ENCODE measurements at regions of chr15 and their contacts with region 1.

Region 1: DNA sequence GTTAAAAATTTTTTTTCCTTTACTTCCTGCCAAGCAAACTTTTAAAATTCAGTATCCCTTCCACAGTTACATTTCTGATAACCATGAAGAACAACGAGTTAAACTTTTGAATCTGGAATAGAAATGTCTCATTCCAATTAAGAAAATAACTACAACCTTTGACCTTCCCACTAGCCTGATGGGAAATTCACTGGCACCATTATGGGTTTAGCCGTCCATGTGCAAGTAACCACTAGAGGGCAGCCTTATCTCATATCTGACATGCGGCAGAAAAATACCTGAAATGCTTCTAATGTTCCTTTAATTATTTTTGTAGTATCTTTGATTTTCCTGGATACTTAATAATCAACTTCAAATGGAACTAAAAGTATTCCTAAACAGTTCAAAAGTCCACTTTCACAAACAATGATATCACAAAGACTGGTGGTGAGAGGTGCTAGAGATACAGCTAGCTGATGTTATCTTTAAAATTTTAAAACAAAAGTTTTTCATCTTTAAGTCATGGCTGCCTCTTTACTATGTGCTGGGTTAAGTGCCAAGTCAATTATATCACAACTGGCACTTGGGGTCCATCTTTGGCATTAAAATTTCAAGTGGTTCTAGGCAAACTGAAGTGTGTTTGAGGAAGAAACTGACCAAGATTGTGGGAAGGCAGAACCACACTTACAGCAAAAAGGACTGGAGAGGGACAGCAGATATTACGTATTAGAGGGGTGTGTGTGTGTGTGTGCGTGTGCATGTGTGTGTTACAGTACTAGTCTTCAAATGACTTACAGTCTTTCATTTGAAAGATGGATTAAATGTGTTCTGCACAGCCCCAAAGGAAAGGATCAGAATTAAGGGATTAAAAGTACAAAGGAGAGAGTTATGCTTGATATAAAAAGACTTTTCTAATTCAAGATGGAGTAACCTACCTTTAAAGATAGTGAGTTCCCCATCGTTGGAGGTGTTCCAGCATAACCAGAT is 107.1 kb upstream of the ICE2 start:
- DNase-seq: peak in 11 of 14 experiments; percentile 20 to 89 (median 53)
- ATAC-seq: peak; percentile 33
- H3K4me3 ChIP-seq: peak overlapping the region; percentile 13
- H3K4me3 Mint-ChIP-seq: peak overlapping the region; percentile 81
- H3K27ac ChIP-seq: peak overlapping the region; percentile 21 to 47
- H3K27ac Mint-ChIP-seq: peak overlapping the region; percentile 85
- H3K4me1 ChIP-seq: peaks cover 35% of the 10 kb centered on the region
- H3K4me1 Mint-ChIP-seq: peaks cover 89% of the 10 kb centered on the region
- H3K27me3 ChIP-seq: no peaks in the 10 kb centered on the region
- H3K27me3 Mint-ChIP-seq: no peaks in the 10 kb centered on the region
- CTCF ChIP-seq: peak; percentile 95

Region 2: GRCh38 chr15:59924812-59925522 is 661.1 kb before region 1 on chr15:
- CTCF ChIA-PET with region 1: no interaction called
- POLR2A ChIA-PET with region 1: no interaction called
- intact Hi-C with region 1: no loop called
- DNase-seq: no peak
- ATAC-seq: no peak
- H3K4me3 ChIP-seq: no peak overlapping the region
- H3K4me3 Mint-ChIP-seq: no peak overlapping the region
- H3K27ac ChIP-seq: no peak overlapping the region
- H3K27ac Mint-ChIP-seq: no peak overlapping the region
- H3K4me1 ChIP-seq: no peaks in the 10 kb centered on the region
- H3K4me1 Mint-ChIP-seq: peaks cover 16% of the 10 kb centered on the region
- H3K27me3 ChIP-seq: peaks cover 0 to 1% of the 10 kb centered on the region in 2 experiments
- H3K27me3 Mint-ChIP-seq: peaks cover 21% of the 10 kb centered on the region
- CTCF ChIP-seq: no peak

Region 3: DNA sequence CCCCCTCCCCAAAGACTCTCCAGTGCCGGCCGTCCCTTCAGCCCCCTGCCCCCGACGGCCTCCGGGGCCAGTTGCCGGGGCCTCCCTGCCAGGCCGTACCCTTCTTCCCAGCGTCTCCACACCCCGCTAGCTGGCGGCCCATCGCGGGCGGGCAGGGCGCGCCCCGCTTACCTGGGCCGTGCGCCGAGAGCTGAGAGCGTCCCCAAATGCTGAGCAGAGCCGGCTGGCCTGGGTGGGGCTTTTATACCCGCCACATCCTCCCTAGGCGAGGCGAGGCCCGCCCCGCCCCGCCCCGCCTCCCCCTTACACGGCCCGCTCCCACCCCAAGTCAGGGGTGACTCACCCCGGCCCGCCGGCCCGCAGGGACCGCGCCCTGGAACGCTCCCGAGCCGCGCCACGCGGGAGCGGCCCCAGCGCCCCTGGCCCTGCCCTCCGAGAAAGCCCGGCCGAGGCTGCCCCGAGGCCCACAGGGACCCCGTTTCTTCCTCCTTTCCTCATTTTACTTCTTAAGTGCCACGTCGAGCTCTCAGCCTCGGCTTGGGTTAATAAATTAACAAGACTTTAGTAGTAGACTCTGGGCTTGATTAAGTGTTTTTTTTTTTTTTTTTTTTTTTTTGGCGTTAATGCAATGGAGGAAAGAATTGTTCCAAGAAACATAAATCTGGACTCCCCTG is 188.1 kb before region 1 on chr15 and contains the start of gene ANXA2:
- CTCF ChIA-PET with region 1: no interaction called
- POLR2A ChIA-PET with region 1: interaction called, 12 read pairs
- intact Hi-C with region 1: loop called in 1 of 2 experiments (anchors 5 kb)
- DNase-seq: peak; percentile 66 to 93 (median 84)
- ATAC-seq: peak; percentile 77
- H3K4me3 ChIP-seq: peak within 1 kb of the TSS; percentile 72
- H3K4me3 Mint-ChIP-seq: peak within 1 kb of the TSS; percentile 92
- H3K27ac ChIP-seq: peak within 1 kb of the TSS; percentile 37 to 75
- H3K27ac Mint-ChIP-seq: peak within 1 kb of the TSS; percentile 97
- H3K4me1 ChIP-seq: peaks cover 58% of the 10 kb centered on the region
- H3K4me1 Mint-ChIP-seq: peaks cover 48% of the 10 kb centered on the region
- H3K27me3 ChIP-seq: no peaks in the 10 kb centered on the region
- H3K27me3 Mint-ChIP-seq: peaks cover 10% of the 10 kb centered on the region
- CTCF ChIP-seq: no peak
- total RNA-seq, gene ANXA2: 70.8 to 74.5 TPM

Region 4: DNA sequence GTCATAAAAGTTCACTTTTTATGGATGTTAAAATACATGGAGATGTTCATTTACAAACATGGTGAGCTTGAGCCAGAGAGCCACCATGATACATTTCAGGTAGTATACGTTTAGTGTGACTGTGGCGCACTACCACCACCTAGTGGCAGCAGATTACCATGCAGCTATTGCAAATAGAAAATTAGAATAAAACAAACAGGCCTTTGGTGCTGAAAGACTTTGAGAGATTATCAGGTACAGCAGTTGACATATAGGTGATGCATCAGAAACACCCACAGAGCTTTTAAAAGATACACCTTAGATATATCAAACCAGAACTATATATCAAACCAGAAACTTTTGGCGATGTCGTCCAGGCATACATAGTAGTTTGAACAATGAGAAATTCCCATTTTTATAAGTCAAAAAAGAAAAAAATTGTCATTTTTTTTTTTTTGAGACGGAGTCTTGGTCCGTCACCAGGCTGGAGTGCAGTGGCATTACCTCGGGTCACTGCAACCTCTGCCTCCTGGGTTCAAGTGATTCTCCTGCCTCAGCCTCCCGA is 65.1 kb before region 1 on chr15:
- CTCF ChIA-PET with region 1: interaction called, 24 read pairs
- POLR2A ChIA-PET with region 1: interaction called, 21 read pairs
- intact Hi-C with region 1: no loop called
- DNase-seq: peak; percentile 68 to 89 (median 78)
- ATAC-seq: peak; percentile 88
- H3K4me3 ChIP-seq: no peak overlapping the region
- H3K4me3 Mint-ChIP-seq: no peak overlapping the region
- H3K27ac ChIP-seq: no peak overlapping the region
- H3K27ac Mint-ChIP-seq: peak overlapping the region; percentile 65
- H3K4me1 ChIP-seq: peaks cover 22% of the 10 kb centered on the region
- H3K4me1 Mint-ChIP-seq: peaks cover 66% of the 10 kb centered on the region
- H3K27me3 ChIP-seq: no peaks in the 10 kb centered on the region
- H3K27me3 Mint-ChIP-seq: no peaks in the 10 kb centered on the region
- CTCF ChIP-seq: peak; percentile 92

Region 5: GRCh38 chr15:60548101-60548500 is 37.9 kb before region 1 on chr15:
- CTCF ChIA-PET with region 1: interaction called, 4 read pairs
- POLR2A ChIA-PET with region 1: interaction called, 13 read pairs
- intact Hi-C with region 1: loop called in 1 of 2 experiments (anchors 5 kb)
- DNase-seq: peak in 5 of 14 experiments; percentile 34 to 69 (median 65)
- ATAC-seq: peak; percentile 57
- H3K4me3 ChIP-seq: peak overlapping the region; percentile 27
- H3K4me3 Mint-ChIP-seq: peak overlapping the region; percentile 71
- H3K27ac ChIP-seq: peak overlapping the region; percentile 2 to 65
- H3K27ac Mint-ChIP-seq: peak overlapping the region; percentile 85
- H3K4me1 ChIP-seq: peaks cover 74% of the 10 kb centered on the region
- H3K4me1 Mint-ChIP-seq: peaks cover 94% of the 10 kb centered on the region
- H3K27me3 ChIP-seq: no peaks in the 10 kb centered on the region
- H3K27me3 Mint-ChIP-seq: no peaks in the 10 kb centered on the region
- CTCF ChIP-seq: no peak

Region 6: GRCh38 chr15:60573936-60574335 is 12.1 kb before region 1 on chr15:
- CTCF ChIA-PET with region 1: interaction called, 15 read pairs
- POLR2A ChIA-PET with region 1: interaction called, 240 read pairs
- intact Hi-C with region 1: loop called in 1 of 2 experiments (anchors 1 kb)
- DNase-seq: peak in 8 of 14 experiments; percentile 25 to 88 (median 60)
- ATAC-seq: peak; percentile 83
- H3K4me3 ChIP-seq: peak overlapping the region; percentile 24
- H3K4me3 Mint-ChIP-seq: peak overlapping the region; percentile 80
- H3K27ac ChIP-seq: peak overlapping the region; percentile 58 to 59
- H3K27ac Mint-ChIP-seq: peak overlapping the region; percentile 84
- H3K4me1 ChIP-seq: peaks cover 83% of the 10 kb centered on the region
- H3K4me1 Mint-ChIP-seq: peaks cover 92% of the 10 kb centered on the region
- H3K27me3 ChIP-seq: no peaks in the 10 kb centered on the region
- H3K27me3 Mint-ChIP-seq: no peaks in the 10 kb centered on the region
- CTCF ChIP-seq: no peak

Region 7: GRCh38 chr15:60787837-60788691 is 202.0 kb after region 1 on chr15:
- CTCF ChIA-PET with region 1: interaction called, 3 read pairs
- POLR2A ChIA-PET with region 1: interaction called, 3 read pairs
- intact Hi-C with region 1: loop called in 1 of 2 experiments (anchors 5 kb)
- DNase-seq: peak in 12 of 14 experiments; percentile 13 to 71 (median 40)
- ATAC-seq: peak; percentile 78
- H3K4me3 ChIP-seq: no peak overlapping the region
- H3K4me3 Mint-ChIP-seq: peak overlapping the region; percentile 55
- H3K27ac ChIP-seq: peak overlapping the region in 1 of 2 donors; percentile 56
- H3K27ac Mint-ChIP-seq: peak overlapping the region; percentile 84
- H3K4me1 ChIP-seq: peaks cover 36% of the 10 kb centered on the region
- H3K4me1 Mint-ChIP-seq: peaks cover 34% of the 10 kb centered on the region
- H3K27me3 ChIP-seq: no peaks in the 10 kb centered on the region
- H3K27me3 Mint-ChIP-seq: no peaks in the 10 kb centered on the region
- CTCF ChIP-seq: peak; percentile 66

Region 8: DNA sequence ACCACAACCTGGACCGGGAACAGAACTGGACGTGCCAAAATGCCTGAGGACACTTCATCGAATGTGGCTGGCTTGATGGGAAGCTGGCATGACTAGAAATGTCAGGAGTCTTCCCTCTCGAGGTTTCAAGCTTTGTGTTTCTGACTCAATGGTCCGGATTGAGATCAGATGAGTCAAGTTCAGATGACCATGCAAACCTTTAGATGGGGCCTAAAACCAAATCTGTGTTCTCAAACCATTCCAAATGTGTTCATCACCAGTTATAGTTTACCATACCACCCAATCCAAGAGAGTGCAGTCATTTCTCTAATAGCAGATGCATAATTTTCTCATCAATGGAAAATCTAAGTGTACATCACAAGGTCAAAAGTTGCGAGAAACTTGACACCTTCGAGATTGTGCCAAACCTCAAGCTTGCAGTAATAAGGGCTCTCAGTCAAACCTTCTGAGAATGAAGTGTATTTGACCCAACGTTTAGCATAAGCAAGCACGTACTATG is 274.0 kb after region 1 on chr15:
- CTCF ChIA-PET with region 1: interaction called, 3 read pairs
- POLR2A ChIA-PET with region 1: interaction called, 23 read pairs
- intact Hi-C with region 1: loop called (anchors 1 kb)
- DNase-seq: peak in 1 of 14 experiments; percentile 46
- ATAC-seq: no peak
- H3K4me3 ChIP-seq: no peak overlapping the region
- H3K4me3 Mint-ChIP-seq: no peak overlapping the region
- H3K27ac ChIP-seq: no peak overlapping the region
- H3K27ac Mint-ChIP-seq: no peak overlapping the region
- H3K4me1 ChIP-seq: no peaks in the 10 kb centered on the region
- H3K4me1 Mint-ChIP-seq: peaks cover 41% of the 10 kb centered on the region
- H3K27me3 ChIP-seq: no peaks in the 10 kb centered on the region
- H3K27me3 Mint-ChIP-seq: no peaks in the 10 kb centered on the region
- CTCF ChIP-seq: no peak